IMR-90 (cell line): ENCODE measurements at regions of chr11 and their contacts with region 1.

Region 1: DNA sequence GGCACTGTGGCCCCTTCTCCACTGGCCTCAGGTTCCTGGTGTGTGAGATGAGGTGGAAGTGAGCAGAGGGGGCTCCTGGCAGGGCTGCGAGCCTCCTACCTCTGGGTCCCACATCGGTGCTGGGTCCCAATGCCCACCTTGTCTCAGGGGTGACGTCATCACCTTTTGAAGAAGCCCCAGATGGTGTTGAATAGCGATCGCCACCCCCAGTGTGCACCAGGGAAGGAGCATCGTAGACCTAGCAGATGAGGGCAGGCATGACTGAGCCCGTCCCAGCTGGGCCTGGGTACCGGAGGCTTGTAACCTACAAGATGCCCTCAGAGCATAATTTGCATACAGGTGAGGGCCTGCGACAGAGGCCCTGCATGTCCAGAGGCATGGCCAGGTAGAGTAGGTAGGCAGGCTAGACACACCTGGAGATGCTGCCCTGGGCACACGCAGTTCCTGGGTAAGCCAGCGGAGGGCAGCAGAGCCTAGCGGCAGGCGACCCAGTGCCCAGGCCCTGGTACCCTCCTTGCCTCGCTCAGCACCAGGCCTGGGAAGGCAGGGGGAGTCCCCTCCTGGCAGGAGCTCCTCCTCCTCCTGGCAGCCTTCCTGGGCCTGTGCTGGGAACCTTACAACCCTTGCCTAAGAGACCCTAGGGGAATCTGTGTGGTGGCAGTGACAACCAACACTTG is 52.5 kb downstream of the TPCN2 start:
- DNase-seq: peak; percentile 73
- ATAC-seq: peak; percentile 94
- H3K4me3 ChIP-seq: no peak overlapping the region
- H3K27ac ChIP-seq: no peak overlapping the region
- H3K4me1 ChIP-seq: peaks cover 3% of the 10 kb centered on the region; the same call in 1 of the 2 replicates
- H3K27me3 ChIP-seq: no peaks in the 10 kb centered on the region
- CTCF ChIP-seq: peak; percentile 97
- POLR2A ChIP-seq: peak; percentile 52; the same call in 1 of the 2 replicates
- RAD21 ChIP-seq: peak; percentile 99

Region 2: DNA sequence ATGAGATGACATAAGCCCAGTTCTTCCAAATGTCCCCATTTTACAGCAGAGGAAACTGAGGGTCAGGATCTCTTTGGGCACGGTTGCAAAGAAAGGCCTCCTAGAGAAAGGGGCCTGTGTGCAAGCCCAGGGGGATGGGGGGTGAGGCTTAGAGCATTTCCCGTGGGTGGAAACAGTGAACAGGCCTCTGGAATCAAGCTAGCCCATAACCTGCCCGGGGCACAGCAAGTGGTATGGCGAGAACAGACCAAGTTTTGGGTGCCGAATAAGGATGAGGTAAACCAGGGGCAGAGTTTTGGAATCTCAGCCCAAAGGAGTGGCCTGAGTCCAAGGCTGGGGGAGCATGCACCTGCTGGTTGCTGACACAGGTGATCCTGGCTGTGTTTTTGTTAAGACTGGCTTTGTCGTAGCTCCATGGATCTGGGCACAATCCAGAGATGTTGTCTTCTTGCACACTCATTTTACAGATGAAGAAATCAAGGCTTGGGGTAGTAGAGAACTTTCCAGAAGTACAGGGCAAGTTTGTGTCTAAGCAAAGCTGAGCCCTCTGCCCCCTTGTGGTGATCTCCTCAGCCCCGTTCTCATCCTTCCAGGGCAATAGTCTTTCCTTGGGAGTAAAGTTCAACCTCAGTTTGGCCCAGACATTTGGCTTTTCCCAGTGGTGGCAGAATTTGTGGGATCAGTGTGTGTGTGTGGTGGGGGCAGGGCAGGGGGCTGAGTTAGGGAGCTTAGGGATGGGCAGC is 139.2 kb after region 1 on chr11:
- CTCF ChIA-PET with region 1: no interaction called
- POLR2A ChIA-PET with region 1: no interaction called
- dilution Hi-C with region 1: no loop called
- in situ Hi-C with region 1: no loop called
- intact Hi-C with region 1: loop called (anchors 1 kb)
- DNase-seq: peak; percentile 14
- ATAC-seq: no peak
- H3K4me3 ChIP-seq: no peak overlapping the region
- H3K27ac ChIP-seq: no peak overlapping the region
- H3K4me1 ChIP-seq: no peaks in the 10 kb centered on the region
- H3K27me3 ChIP-seq: peaks cover 9% of the 10 kb centered on the region
- CTCF ChIP-seq: peak; percentile 40
- POLR2A ChIP-seq: no peak
- RAD21 ChIP-seq: peak; percentile 45; the same call in 1 of the 2 replicates

Region 3: DNA sequence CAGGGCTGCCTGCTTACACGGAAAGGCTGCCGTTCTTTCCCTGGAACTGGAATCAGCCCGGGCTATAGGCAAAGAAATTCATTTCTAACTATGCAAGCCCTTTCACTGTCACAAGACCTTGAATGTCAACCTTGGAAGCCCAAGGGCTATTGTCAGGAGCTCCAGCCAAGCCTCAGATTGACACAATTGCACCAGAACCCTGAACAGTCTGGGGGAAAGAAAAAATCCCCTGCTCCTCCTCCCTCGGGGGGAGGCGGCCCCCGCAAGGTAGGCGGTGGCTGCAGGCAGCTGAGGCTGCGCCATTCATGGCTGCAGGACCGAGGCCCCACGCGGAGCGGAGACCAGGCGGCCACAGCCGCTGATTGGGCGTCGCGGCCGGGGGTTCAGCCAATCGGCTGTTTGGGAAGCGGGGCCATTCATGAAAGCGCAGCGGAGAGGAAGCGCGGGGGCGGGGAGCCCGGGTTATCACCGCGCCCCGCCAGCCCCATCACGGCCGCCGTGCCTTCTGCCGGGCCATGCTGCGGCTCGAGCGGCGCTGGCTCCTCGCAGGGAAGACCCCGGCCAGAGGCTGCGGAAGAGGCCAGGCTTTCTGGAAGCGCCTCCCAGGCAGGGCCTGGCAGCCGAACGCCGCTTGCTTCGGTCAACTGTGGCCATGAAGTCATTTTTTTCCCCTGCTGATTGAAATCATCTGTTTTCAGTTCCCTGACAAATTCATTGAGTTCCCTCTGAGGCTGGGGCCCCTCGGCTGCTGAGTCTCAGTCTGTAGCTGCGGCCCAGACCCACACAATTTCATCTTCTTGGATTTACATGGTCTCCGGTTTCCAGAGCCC is 342.1 kb after region 1 on chr11:
- CTCF ChIA-PET with region 1: no interaction called
- POLR2A ChIA-PET with region 1: no interaction called
- dilution Hi-C with region 1: no loop called
- in situ Hi-C with region 1: no loop called
- intact Hi-C with region 1: loop called (anchors 5 kb)
- DNase-seq: peak; percentile 94
- ATAC-seq: peak; percentile 93
- H3K4me3 ChIP-seq: peak overlapping the region; percentile 36
- H3K27ac ChIP-seq: peak overlapping the region; percentile 95
- H3K4me1 ChIP-seq: peaks cover 27% of the 10 kb centered on the region
- H3K27me3 ChIP-seq: no peaks in the 10 kb centered on the region
- CTCF ChIP-seq: no peak
- POLR2A ChIP-seq: peak; percentile 84
- RAD21 ChIP-seq: no peak; the same call in 1 of the 2 replicates

Region 4: GRCh38 chr11:69670158-69670845 is 569.0 kb after region 1 on chr11:
- CTCF ChIA-PET with region 1: interaction called, 9 read pairs
- POLR2A ChIA-PET with region 1: no interaction called
- dilution Hi-C with region 1: no loop called
- in situ Hi-C with region 1: loop called (anchors 5 kb)
- intact Hi-C with region 1: loop called (anchors 1 kb)
- DNase-seq: peak; percentile 84
- ATAC-seq: peak; percentile 69
- H3K4me3 ChIP-seq: no peak overlapping the region
- H3K27ac ChIP-seq: no peak overlapping the region
- H3K4me1 ChIP-seq: peaks cover 7% of the 10 kb centered on the region
- H3K27me3 ChIP-seq: no peaks in the 10 kb centered on the region
- CTCF ChIP-seq: peak; percentile 94
- POLR2A ChIP-seq: peak; percentile 63
- RAD21 ChIP-seq: peak; percentile 94